ENCODE measurements at regions of chr14 and their contacts with region 1.

Region 1: DNA sequence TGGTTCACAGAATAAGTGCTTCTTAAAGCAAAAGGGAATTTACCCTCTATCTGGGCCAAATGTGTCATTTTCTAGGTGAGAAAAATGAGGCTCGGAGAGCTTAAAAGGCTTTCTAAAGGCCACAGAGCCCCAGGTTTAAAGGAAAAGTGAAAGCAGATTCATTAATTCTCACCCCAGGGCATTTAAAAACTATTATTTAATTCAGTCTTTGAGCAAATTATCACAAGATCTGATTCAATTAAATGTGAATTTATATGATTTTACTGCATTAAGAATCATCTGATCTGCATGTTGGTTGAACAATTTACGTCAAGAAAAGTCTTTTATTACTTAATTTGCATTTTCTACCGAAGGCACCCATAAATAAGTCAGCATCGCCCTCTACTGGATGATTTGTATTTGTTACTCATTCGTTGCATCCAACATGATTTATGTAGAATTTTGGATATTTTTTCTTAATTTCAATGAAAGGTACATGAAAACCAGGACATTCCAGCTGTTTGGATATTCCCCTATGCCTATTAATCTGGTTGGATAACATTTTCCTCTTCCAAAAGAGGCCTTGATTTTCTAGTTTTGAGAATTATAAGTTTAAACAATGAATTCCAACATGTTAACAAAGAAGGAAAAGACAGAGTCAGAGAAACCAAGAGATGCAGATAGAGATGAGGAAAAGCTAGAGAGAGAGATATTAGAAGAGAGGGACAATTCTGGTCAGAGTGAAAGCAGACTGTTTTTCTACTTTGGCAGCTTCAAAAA is 19.1 kb upstream of the DHRS7 start:
- DNase-seq: no peak
- H3K4me3 ChIP-seq: peak overlapping the region; percentile 55 to 65
- H3K27ac ChIP-seq: peak overlapping the region; percentile 39 to 45
- H3K4me1 ChIP-seq: peaks cover 0 to 3% of the 10 kb centered on the region in 2 donors
- H3K27me3 ChIP-seq: no peaks in the 10 kb centered on the region
- CTCF ChIP-seq: peak; percentile 72 to 81 (median 75)

Region 2: DNA sequence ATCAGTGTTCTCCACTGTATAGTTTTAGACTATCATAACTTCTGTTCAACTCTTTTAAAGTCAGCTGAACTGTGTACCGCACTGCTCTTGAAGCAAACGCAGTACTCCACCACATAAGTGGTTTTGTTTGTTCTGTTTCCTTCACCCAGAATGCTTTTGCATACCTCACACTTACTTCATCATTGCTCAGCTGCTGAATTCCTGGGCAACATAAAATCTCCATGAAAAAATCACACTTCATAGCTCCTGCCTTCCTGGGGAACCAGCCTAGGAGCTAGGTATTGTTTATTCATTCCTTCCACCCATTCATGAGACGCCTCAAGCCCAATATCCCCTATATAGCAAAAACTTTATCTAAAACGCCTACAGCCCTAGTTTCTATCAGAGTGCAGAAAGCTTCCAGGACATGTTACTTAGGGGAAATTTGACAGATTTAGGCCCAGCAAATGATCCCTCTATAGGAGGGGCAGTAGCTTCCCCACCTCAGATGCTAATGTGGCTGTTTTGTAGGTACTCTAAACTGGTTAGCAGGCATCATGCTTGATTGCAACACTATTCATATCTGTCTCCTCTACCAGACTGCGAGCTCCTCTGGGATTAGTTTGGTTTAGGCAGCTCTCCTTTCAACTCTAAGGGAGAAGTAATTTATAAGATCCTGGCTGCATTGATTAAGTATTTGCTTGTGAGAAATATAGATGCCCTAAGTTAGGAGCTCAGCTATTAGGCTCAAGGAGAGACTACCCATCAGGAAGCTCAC is 219.9 kb before region 1 on chr14:
- intact Hi-C with region 1: loop called (anchors 1 kb)
- DNase-seq: no peak
- H3K4me3 ChIP-seq: no peak overlapping the region
- H3K27ac ChIP-seq: no peak overlapping the region
- H3K4me1 ChIP-seq: no peaks in the 10 kb centered on the region
- H3K27me3 ChIP-seq: no peaks in the 10 kb centered on the region
- CTCF ChIP-seq: no peak

Region 3: DNA sequence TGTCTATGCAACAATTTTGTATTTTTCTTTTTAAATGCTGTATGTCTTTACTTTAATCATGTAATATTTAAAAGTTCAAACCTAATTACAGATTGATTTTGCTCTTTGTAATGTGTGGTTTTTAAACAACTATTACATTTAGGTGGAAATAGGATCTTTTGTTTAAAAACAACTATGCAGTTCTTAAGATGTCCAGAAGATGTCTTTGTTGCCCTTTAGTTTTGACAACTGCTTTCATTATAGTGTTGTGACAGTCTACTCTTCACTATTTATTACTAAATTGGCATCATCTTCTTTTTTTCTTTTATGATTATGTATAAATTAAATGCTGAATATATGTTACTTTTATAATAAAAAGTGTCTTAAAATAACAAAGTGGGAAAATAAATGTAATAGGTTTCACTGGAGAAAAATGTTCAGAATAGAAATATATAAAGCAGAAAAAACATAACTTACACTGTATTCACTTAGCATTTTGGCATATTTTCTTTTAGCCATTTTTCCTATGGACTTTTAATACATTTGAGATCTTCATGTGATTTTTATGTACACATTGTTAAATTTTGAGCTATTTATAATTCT is 119.7 kb before region 1 on chr14:
- intact Hi-C with region 1: loop called (anchors 1 kb)
- DNase-seq: no peak
- H3K4me3 ChIP-seq: no peak overlapping the region
- H3K27ac ChIP-seq: no peak overlapping the region
- H3K4me1 ChIP-seq: no peaks in the 10 kb centered on the region
- H3K27me3 ChIP-seq: no peaks in the 10 kb centered on the region
- CTCF ChIP-seq: peak; percentile 33 to 61 (median 55)

Region 4: GRCh38 chr14:60544659-60545058 is 360.3 kb after region 1 on chr14:
- intact Hi-C with region 1: no loop called
- DNase-seq: no peak
- H3K4me3 ChIP-seq: no peak overlapping the region
- H3K27ac ChIP-seq: no peak overlapping the region
- H3K4me1 ChIP-seq: no peaks in the 10 kb centered on the region
- H3K27me3 ChIP-seq: no peaks in the 10 kb centered on the region
- CTCF ChIP-seq: no peak